ENCODE measurements at regions of chr18 and their contacts with region 1.

Region 1: DNA sequence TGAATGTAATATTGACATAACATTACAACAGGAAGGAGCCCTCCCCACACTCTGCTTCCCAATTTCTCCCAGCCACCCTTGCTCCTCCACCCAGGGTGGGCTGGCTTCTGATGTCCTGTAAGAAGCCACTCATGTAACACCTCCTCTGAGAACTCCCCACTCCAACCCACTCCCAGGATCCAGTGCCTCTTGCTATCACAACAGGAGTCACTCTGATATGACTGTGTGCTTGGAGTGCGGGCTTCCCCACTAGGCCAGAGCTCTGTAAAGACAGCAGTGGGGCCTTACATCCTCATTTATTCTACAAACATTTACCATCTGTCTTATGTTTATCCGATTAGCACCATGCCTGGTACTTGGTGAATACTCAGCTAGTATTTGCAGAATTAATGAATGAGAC is 65.1 kb downstream of the PTGR3 start:
- DNase-seq: no peak
- ATAC-seq: no peak
- H3K4me3 ChIP-seq: no peak overlapping the region
- H3K27ac ChIP-seq: no peak overlapping the region
- H3K4me1 ChIP-seq: no peaks in the 10 kb centered on the region
- H3K27me3 ChIP-seq: no peaks in the 10 kb centered on the region
- CTCF ChIP-seq: no peak

Region 2: DNA sequence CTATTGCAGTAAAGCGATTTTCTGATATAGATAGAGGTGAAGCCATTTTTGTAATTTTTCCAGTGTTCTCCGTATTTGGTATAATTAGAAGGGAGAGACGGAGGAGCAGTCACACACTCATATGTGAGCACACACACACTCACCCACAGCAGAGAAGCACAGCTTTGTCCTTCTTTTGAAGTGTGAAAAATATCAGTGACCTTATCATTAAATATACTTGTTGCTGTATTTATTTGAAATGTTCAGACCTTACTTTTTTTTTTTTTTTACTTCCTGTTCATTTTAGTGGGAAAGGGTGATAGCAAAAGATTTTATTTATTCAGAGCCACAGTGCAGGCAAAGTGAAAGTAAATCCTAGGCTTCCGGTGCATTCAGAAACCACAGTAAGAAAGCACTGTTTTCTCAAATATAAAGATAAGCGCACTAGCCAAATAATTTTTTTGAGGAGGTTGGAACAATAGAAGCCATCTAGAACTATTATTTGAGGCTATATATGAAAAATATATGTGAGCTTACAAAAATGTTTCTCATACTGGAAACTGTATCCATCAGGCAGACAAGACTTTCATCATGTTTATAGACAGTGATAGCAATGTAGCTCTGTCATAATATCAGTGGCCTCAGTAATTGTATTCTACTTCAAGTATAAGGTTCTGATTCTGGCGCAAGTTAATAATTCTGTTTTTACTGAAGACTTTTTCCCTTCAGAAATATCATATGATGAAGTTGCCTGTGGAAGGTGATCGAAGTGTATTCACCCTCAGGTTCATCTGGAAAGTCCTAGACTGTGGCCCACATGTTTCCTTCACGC is 104.0 kb after region 1 on chr18:
- CTCF ChIA-PET with region 1: no interaction called
- POLR2A ChIA-PET with region 1: interaction called, 14 read pairs
- in situ Hi-C with region 1: no loop called
- intact Hi-C with region 1: no loop called
- DNase-seq: peak; percentile 61
- ATAC-seq: peak; percentile 43
- H3K4me3 ChIP-seq: peak overlapping the region; percentile 37 to 47
- H3K27ac ChIP-seq: peak overlapping the region; percentile 92
- H3K4me1 ChIP-seq: peaks cover 27% of the 10 kb centered on the region
- H3K27me3 ChIP-seq: no peaks in the 10 kb centered on the region
- CTCF ChIP-seq: no peak

Measured in Panc1 (cell line).